CD4-positive, alpha-beta memory T cell (primary cell): ENCODE measurements at regions of chr13 and their contacts with region 1.

Region 1: DNA sequence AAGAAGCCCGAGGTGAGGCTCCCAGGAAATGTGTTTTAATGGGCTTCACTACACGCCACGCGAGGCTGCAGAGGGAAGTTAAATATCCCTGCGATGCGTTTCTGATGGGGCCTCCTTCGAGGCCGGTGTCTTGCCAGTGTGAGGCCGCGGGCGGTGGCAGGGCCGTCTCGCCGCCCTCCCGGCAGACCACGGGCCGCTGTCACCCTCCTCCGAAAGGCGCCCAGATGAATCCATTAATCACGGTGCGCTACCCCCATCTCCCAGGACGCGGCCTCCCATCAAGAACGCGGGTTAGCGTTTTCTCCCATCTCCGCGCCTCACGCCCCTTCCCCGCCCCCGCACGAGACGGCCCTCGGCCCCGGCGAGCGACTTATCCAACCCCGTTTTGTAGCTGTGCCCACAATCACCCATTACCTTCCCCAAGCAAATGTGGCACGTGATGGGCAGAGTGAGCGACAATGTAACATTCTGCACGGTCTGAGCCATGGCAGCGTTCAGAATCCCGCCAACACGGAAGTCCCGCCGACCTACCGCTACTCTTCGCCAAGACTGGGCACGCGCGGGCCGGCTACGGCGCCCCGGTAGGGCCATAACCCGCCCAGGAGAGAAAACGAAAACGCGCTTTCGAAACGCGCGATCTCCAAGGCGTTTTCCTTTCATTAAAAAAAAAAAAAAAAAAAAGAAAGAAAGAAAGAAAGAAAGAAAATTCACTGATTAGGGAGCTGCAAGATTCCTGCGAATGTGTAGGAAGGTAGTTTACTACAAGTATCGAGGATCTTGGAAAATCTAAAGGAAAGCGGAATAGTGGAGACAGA is at the start of gene OBI1:
- DNase-seq: peak; percentile 89 to 91 (median 89)
- H3K4me3 ChIP-seq: peak within 1 kb of the TSS; percentile 84 to 94
- H3K4me3 Mint-ChIP-seq: peak within 1 kb of the TSS; percentile 98 to 100 (median 100)
- H3K27ac ChIP-seq: peak within 1 kb of the TSS; percentile 73
- H3K27ac Mint-ChIP-seq: peak within 1 kb of the TSS; percentile 87 to 99 (median 98)
- H3K4me1 ChIP-seq: peaks cover 24% of the 10 kb centered on the region
- H3K4me1 Mint-ChIP-seq: peaks cover 23 to 42% (median 37%) of the 10 kb centered on the region in 4 donors
- H3K27me3 ChIP-seq: no peaks in the 10 kb centered on the region
- H3K27me3 Mint-ChIP-seq: peaks cover 0 to 2% of the 10 kb centered on the region in 2 donors
- total RNA-seq, gene OBI1: 16.3 to 16.7 TPM

Region 2: DNA sequence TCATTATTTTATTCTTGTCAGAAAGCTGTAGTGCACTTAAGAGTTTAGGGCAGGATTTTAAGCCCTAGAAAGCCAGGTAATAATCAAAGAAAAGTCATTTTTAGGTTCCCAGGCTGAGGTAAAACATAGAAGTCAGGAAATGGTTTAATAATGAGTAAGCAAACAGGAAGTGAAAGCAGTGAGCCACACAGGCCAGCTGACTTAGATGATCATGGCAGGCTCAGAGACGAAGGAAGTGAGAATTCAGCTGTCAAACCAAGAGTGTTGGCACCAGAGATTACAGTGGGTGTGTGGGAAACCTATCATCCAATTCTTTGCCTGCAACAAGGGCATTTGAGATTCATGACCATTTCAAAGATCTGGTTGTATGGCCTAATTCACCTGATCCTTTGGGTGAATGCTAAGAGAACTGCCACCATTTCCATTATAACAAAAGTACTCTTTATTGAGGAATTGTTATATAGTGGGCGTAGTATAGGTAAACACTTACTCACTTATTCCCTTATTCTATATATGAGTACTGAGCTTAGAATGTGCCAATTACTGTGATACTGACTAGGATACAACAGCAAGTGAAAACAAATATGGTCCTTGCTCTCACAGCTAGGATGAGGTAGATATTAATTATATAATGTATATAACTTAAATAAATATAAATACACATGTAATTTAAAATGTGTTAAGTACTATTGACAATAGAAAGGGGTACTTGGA is 636.5 kb before region 1 on chr13:
- CTCF ChIA-PET with region 1: no interaction called
- POLR2A ChIA-PET with region 1: no interaction called
- intact Hi-C with region 1: loop called (anchors 5 kb)
- DNase-seq: peak; percentile 28 to 49 (median 36)
- H3K4me3 ChIP-seq: no peak overlapping the region
- H3K4me3 Mint-ChIP-seq: peak overlapping the region in 4 of 8 donors; percentile 2 to 55 (median 16)
- H3K27ac ChIP-seq: no peak overlapping the region
- H3K27ac Mint-ChIP-seq: peak overlapping the region; percentile 12 to 87 (median 47)
- H3K4me1 ChIP-seq: peaks cover 12% of the 10 kb centered on the region
- H3K4me1 Mint-ChIP-seq: peaks cover 6 to 12% (median 10%) of the 10 kb centered on the region in 4 donors
- H3K27me3 ChIP-seq: no peaks in the 10 kb centered on the region
- H3K27me3 Mint-ChIP-seq: peaks cover 0 to 11% of the 10 kb centered on the region in 2 donors

Region 3: GRCh38 chr13:78601124-78601885 is 57.5 kb before region 1 on chr13:
- CTCF ChIA-PET with region 1: no interaction called
- POLR2A ChIA-PET with region 1: interaction called, 5 read pairs
- intact Hi-C with region 1: loop called (anchors 2 kb)
- DNase-seq: no peak
- H3K4me3 ChIP-seq: no peak overlapping the region
- H3K4me3 Mint-ChIP-seq: peak overlapping the region; percentile 4 to 78 (median 65)
- H3K27ac ChIP-seq: no peak overlapping the region
- H3K27ac Mint-ChIP-seq: peak overlapping the region in 3 of 7 donors; percentile 3 to 81 (median 80)
- H3K4me1 ChIP-seq: peaks cover 30% of the 10 kb centered on the region
- H3K4me1 Mint-ChIP-seq: peaks cover 18 to 52% (median 25%) of the 10 kb centered on the region in 4 donors
- H3K27me3 ChIP-seq: peaks cover 89% of the 10 kb centered on the region
- H3K27me3 Mint-ChIP-seq: peaks cover 71 to 76% of the 10 kb centered on the region in 2 donors